ENCODE measurements at regions of chr7 and their contacts with region 1.

Region 1: GRCh38 chr7:104231054-104232046 is 23.5 kb upstream of the ORC5 start:
- DNase-seq: peak; percentile 54
- ATAC-seq: peak; percentile 97
- H3K4me3 Mint-ChIP-seq: peak overlapping the region; percentile 60
- H3K27ac Mint-ChIP-seq: no peak overlapping the region
- H3K4me1 Mint-ChIP-seq: peaks cover 5% of the 10 kb centered on the region; the same call in 1 of the 2 replicates
- H3K27me3 Mint-ChIP-seq: peaks cover 7% of the 10 kb centered on the region
- CTCF ChIP-seq: peak; percentile 48

Region 2: DNA sequence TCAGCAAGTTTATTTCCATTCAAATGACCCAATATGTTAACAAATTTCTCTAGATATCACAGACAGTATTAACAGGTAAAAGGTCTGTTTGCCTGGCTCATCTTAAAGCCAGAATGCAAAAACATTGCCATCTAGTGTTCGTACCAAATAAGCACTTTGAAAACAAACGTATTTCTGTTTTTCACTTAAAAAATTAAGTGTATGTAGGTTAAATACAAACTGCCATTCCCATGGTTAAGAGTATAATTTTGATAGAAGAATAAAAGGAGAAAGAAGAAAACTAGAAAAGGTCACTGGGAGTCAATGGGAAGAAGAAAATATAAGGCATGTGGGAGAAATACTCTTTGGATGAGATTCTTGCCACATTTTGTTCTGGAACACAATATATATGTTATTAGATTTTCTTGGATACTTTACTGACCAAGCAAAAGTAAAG is 74.5 kb before region 1 on chr7:
- CTCF ChIA-PET with region 1: no interaction called
- POLR2A ChIA-PET with region 1: no interaction called
- DNase-seq: no peak
- ATAC-seq: no peak
- H3K4me3 Mint-ChIP-seq: no peak overlapping the region
- H3K27ac Mint-ChIP-seq: no peak overlapping the region
- H3K4me1 Mint-ChIP-seq: no peaks in the 10 kb centered on the region
- H3K27me3 Mint-ChIP-seq: no peaks in the 10 kb centered on the region
- CTCF ChIP-seq: 0 out of 2 replicates have a peak, but pooled peaks have one; percentile 16

Region 3: GRCh38 chr7:104207731-104208420 is 23.5 kb before region 1 on chr7 and contains the start of gene ORC5:
- CTCF ChIA-PET with region 1: interaction called, 13 read pairs
- POLR2A ChIA-PET with region 1: no interaction called
- DNase-seq: peak; percentile 60
- ATAC-seq: peak; percentile 99
- H3K4me3 Mint-ChIP-seq: peak within 1 kb of the TSS; percentile 93
- H3K27ac Mint-ChIP-seq: peak within 1 kb of the TSS; percentile 82
- H3K4me1 Mint-ChIP-seq: peaks cover 16% of the 10 kb centered on the region
- H3K27me3 Mint-ChIP-seq: peaks cover 31% of the 10 kb centered on the region
- CTCF ChIP-seq: no peak
- total RNA-seq, gene ORC5: 21.0 to 23.3 TPM (median 22.2 TPM) in 3 replicates

Region 4: GRCh38 chr7:104252404-104253134 is 21.2 kb after region 1 on chr7:
- CTCF ChIA-PET with region 1: interaction called, 21 read pairs
- POLR2A ChIA-PET with region 1: no interaction called
- DNase-seq: no peak
- ATAC-seq: peak; percentile 87
- H3K4me3 Mint-ChIP-seq: no peak overlapping the region
- H3K27ac Mint-ChIP-seq: no peak overlapping the region
- H3K4me1 Mint-ChIP-seq: peaks cover 3% of the 10 kb centered on the region
- H3K27me3 Mint-ChIP-seq: peaks cover 6% of the 10 kb centered on the region
- CTCF ChIP-seq: no peak

Region 5: DNA sequence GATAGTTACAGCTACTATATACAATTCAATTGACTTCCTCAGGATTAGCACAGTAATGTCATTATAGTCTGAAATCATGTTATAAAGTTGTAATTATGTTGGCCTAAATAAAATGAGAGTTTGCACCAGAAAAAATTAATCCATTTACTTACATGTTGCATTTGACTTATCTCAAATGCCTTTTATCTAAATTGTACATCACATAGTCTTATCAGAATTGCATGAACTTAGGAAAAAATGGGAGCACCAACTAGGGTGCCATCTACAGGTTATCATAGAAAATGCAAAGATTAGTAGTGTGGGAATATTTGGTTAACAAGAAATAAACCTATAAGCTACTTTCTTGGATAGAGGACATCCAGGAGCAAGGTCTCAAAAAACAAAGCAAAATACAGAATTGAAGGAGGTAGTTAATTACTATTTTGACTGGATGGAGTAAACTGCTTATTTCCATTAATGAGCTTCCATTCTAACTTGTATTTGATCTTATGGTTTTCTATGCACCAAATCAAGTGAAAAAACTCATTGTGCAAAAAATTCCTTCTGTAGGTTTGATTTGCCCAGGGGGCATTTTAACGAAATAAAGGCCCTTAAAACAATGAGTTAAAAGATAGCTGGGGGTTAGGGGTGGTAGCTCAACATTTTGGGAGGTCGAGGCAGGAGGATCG is 36.5 kb after region 1 on chr7:
- CTCF ChIA-PET with region 1: interaction called, 29 read pairs
- POLR2A ChIA-PET with region 1: no interaction called
- DNase-seq: no peak
- ATAC-seq: no peak
- H3K4me3 Mint-ChIP-seq: no peak overlapping the region
- H3K27ac Mint-ChIP-seq: no peak overlapping the region
- H3K4me1 Mint-ChIP-seq: no peaks in the 10 kb centered on the region
- H3K27me3 Mint-ChIP-seq: no peaks in the 10 kb centered on the region; the same call in 1 of the 2 replicates
- CTCF ChIP-seq: peak; percentile 41; the same call in 1 of the 2 replicates

Region 6: GRCh38 chr7:104643587-104644217 is 412.4 kb after region 1 on chr7:
- CTCF ChIA-PET with region 1: interaction called, 14 read pairs
- POLR2A ChIA-PET with region 1: no interaction called
- DNase-seq: peak; percentile 26
- ATAC-seq: peak; percentile 69
- H3K4me3 Mint-ChIP-seq: no peak overlapping the region
- H3K27ac Mint-ChIP-seq: no peak overlapping the region
- H3K4me1 Mint-ChIP-seq: peaks cover 5% of the 10 kb centered on the region; the same call in 1 of the 2 replicates
- H3K27me3 Mint-ChIP-seq: no peaks in the 10 kb centered on the region
- CTCF ChIP-seq: peak; percentile 46; the same call in 1 of the 2 replicates

Region 7: DNA sequence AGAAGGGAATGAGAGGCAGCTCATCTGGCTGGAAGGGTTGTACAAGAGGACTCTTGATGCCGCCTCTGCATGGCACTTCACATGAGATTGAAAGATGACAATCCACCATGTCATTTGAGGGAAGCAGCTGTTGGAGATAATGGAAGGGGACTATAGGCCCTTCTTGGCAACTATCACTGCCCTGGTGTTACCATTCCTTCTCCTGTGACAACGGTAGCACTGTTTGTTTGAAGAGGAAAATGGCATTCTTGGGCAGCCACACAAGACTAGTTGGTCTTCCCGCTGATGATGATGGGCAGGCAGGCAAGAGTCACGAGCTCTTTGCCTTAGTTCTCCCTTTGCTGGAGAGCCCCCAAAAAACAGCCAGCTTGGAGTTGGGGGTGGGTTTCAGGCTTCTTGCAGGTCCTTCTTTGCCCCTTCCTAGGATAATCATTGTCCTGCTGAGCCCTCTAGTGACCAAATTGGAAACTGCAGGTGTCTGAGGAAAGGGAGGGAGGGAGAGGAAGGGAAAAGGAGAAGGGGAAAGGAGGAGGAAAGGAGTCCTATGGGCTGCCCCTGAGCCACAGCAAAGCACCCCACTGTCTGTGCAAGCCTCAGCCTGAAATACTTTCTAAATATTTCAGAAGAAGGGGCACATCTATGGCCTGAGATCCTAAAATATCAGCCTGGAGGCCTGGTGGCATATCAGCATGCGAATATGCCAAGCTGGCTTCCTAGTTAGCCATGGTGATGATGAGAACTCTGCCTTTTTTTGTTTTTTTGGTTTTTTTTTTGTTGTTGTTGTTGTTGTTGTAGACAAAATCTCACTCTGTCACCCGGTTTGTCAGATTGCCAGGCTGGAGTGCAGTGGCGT is 617.0 kb after region 1 on chr7:
- CTCF ChIA-PET with region 1: interaction called, 15 read pairs
- POLR2A ChIA-PET with region 1: no interaction called
- DNase-seq: peak; percentile 84
- ATAC-seq: peak; percentile 94
- H3K4me3 Mint-ChIP-seq: no peak overlapping the region
- H3K27ac Mint-ChIP-seq: no peak overlapping the region
- H3K4me1 Mint-ChIP-seq: no peaks in the 10 kb centered on the region
- H3K27me3 Mint-ChIP-seq: no peaks in the 10 kb centered on the region
- CTCF ChIP-seq: peak; percentile 96

Measured in WTC11 (cell line).